HEK293T (cell line): ENCODE measurements at regions of chr1 and their contacts with region 1.

Region 1: DNA sequence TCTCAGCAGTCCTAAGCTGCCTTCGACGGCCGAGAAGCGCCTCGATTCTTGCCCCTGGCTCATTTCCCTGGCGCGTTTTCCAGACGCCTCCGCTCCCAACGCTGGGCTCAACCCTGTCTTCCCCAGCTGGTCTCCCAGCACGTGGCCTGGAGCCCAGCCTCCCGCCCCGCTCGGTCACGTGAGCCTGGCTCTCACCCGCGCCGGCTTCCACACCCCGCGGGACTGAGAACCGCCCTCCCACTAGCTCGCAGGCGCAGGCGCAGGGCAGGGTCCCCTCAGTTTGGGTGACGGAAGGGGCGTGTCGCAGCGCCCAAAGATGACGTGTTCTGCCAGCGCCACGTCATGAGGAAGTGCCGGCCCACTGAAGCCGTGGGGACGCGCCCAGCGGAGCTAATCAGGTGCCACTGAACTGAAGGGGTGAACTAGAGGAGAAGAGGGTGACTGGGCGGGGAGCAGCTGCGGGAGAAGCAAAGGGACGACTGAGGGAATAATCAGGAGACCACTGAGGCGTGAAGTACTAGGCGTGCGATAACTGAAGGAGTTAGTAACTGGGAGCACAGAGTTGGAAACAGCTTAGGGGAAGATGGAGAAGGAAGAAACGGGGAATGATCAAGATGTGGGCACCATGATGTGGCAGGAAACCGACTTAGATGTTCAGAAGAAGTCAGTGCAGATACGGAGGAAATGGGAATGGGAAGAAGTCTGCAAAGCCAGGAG is at the start of gene DHDDS:
- DNase-seq: peak; percentile 99

Region 2: DNA sequence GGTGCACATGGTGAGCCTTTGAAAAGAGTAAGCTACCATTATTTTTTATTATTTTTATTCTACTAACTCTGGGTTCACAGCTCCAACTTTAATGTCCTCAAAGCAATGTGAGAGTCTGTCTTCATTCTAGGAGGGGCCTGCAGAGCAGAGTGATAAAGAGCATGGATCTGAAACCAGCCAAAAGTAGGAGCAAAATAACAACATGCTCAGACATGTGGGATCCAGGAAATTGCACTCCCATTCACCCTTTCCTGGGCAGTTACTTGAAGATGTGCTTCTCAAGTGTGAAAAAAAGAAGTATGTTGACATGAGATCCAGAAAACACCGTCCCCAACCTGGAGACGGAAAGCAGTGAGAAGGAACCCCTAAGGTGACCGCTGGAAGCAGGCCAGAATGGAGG is 30.2 kb before region 1 on chr1:
- CTCF ChIA-PET with region 1: no interaction called
- POLR2A ChIA-PET with region 1: no interaction called
- DNase-seq: no peak

Region 3: DNA sequence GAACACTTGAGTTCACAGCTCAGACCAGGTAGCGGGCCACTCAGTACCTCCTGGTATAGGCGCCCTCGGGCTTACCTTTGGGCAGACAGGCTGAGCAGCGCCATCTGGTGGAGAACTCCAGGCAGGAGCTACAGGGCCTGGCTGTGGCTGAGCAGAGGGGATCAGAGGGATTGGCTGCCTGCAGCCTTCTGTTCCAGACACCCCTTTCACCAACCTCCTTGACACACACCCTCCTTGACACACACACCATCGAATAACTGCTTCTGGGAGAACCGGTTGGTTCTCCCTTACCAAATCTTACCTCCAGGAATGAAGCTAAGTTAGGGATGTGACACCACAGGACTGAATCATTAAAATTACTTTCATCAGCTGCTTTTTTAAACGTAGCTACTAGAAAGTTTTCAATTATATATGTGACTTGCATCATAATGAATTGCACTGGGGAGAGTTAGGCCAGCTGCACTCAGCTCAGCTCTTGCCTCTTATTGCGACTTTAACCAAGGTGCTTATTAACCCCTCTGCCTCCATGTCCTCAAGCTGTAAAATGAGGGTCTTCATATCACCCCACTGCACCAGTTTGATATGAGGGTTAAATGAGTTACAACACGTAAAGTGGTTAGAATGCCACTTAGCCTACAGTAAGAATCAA is 14.9 kb before region 1 on chr1:
- CTCF ChIA-PET with region 1: interaction called, 14 read pairs
- POLR2A ChIA-PET with region 1: interaction called, 9 read pairs
- DNase-seq: peak; percentile 80

Region 4: DNA sequence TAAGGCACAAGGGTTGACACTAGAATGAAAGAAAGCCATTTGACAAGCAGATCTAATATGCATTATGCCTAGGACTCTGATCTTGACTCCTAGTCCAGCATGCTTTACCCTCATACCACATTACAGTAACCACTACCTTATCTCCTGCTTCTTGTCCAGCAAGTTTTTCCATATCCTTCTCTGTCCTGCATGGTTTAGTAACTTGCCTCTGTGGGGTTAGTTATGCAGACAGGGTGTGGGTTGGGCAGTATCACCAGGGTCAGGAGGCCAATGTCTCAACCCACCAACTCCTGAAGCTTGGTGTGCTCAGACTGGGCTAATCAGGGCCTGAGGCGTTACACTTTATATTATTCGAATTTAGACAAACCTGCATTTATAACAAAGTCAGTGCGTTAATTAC is 18.8 kb after region 1 on chr1:
- CTCF ChIA-PET with region 1: no interaction called
- POLR2A ChIA-PET with region 1: interaction called, 24 read pairs
- DNase-seq: no peak

Region 5: DNA sequence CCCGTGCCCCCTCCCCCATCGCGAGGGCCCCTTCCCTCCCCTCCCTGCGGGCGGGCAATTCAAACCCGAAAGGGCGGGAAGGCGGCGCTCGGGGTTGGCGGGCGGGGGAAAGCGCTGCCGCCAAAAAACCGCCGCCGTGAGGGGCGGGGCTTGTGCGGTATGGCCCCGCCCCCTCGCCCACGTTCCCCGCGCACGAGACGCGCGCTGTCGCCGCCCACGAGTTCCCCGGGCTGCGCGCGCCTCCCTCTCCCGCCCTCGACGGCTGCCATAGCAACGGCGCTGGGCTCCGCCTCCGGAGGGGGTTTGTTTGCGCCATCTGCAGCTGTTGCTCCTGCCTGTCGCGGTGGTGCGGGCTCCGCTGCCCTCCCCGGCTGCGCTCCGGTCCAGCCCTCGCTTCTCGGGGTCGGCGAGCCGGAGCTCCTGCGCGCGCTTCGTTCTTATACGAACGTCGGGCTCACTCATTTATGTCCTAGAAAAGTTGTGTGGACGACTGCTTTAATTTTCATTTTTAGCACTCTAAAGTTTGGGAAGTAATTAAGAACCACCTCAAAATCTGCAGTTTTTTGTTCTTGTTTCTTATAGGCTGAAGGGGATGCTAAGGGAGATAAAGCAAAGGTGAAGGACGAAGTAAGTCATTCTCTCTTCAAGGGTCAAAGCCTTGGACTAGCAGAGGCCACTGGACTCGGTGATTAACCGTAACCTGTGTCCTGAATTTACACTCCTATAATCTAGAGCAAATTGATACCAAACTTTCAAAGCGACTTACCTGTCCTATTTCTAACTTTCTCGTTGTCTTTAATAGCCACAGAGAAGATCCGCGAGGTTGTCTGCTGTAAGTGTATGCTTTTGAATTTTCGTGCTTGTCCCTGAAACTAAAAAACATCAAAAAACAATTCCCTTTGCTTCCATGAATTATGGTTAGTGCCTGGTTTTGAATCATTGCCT is 41.0 kb after region 1 on chr1:
- CTCF ChIA-PET with region 1: interaction called, 5 read pairs
- POLR2A ChIA-PET with region 1: interaction called, 27 read pairs
- DNase-seq: peak; percentile 96